ENCODE measurements at regions of chr7 and their contacts with region 1.

Region 1: DNA sequence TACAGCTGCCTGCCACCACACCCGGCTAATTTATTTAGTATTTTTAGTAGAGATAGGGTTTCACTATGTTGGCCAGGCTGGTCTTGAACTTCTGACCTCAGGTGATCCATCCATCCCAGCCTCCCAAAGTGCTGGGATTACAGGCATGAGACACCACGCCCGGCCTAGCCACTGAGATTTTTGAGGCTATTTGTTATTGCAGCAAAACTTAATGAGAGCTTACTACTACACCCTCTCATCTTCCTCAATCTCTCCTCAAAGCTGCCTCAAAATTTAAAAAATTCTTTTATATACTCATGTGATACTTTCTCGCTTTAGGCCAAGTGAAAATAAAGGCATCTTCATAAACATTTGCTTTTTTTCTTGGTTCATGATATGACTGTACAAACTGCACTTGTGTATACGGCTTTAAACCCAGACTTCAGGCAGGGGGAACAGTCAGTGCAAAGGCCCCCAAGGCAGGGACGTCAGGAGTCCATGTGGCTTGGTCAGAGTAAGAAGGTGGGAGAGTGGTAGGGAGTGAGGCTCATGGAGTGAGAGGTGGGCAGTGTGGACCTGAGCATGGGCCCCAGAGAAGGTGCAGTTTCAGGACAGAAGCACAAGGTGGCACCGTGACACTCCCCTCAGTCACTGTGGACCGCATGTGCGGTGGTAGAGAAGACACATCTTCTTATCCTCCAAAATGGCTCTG is 55.5 kb downstream of the SYPL1 start:
- DNase-seq: peak; percentile 51
- H3K4me3 Mint-ChIP-seq: no peak overlapping the region
- H3K27ac Mint-ChIP-seq: no peak overlapping the region
- H3K4me1 Mint-ChIP-seq: peaks cover 22% of the 10 kb centered on the region
- H3K27me3 Mint-ChIP-seq: peaks cover 15% of the 10 kb centered on the region

Region 2: GRCh38 chr7:106153891-106154449 is 97.3 kb after region 1 on chr7:
- intact Hi-C with region 1: loop called (anchors 1 kb)
- DNase-seq: peak; percentile 57
- H3K4me3 Mint-ChIP-seq: no peak overlapping the region
- H3K27ac Mint-ChIP-seq: peak overlapping the region; percentile 13
- H3K4me1 Mint-ChIP-seq: no peaks in the 10 kb centered on the region
- H3K27me3 Mint-ChIP-seq: peaks cover 41% of the 10 kb centered on the region

Region 3: DNA sequence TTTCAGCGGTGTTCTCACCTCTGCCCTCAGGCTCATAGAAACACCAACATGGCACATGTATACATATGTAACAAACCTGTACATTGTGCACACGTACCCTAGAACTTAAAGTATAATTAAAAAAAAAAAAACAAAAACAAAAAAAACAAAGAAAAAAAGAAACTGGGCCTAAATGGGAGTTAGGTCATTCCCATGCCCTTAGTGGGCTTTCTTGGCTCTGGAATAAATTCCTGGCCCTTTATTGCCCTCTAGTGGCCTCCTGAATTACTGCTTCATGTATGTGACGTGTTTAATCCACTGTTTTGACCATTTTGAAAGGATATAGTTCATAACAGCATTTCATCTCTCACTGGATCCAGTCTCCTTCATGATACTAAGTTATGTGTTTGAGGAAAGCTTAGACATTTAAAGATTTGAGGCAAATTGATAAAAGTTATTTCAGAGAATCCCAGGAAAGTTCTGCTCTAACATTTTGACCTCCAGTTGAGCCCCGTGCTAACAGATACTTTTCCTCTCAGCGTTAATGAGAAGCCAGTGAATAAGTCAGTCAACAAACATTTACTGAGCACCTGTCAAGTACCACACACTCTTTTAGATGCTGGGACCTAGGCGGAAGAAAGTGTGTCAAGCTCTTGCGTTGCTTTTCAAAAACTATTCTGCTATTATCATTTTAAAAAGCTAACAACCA is 110.1 kb after region 1 on chr7:
- intact Hi-C with region 1: loop called (anchors 1 kb)
- DNase-seq: no peak
- H3K4me3 Mint-ChIP-seq: no peak overlapping the region
- H3K27ac Mint-ChIP-seq: no peak overlapping the region
- H3K4me1 Mint-ChIP-seq: no peaks in the 10 kb centered on the region
- H3K27me3 Mint-ChIP-seq: peaks cover 16% of the 10 kb centered on the region

Region 4: DNA sequence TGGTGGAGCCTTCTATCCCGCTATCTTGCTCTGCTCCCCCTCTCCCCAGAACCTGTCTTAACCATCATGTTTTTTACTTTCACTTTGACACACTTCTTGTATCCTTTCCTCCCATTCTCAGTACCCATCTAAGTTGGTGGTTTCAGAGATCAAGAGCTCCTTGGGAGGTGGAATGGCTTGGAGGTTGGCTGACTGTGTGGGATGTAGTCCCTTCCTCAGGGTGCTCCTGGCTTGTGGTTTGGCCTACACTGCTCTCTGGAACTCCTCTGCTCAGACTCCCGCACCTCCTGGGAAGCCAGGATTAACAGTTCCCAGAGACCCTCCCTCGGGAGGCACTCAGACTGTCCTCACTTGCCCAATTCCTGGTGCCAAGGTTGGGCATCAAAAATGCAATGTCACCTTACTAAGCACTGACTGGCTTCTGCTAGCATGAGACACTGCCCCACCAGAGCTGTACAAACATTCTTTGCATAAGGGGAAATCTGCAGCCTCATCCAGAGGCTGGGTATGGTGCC is 321.2 kb after region 1 on chr7:
- intact Hi-C with region 1: no loop called
- DNase-seq: no peak
- H3K4me3 Mint-ChIP-seq: no peak overlapping the region
- H3K27ac Mint-ChIP-seq: no peak overlapping the region
- H3K4me1 Mint-ChIP-seq: peaks cover 19% of the 10 kb centered on the region
- H3K27me3 Mint-ChIP-seq: no peaks in the 10 kb centered on the region